RWPE1 (cell line): ENCODE measurements at regions of chr11 and their contacts with region 1.

Region 1: GRCh38 chr11:61639816-61640443 is 40.3 kb upstream of the DAGLA start:
- DNase-seq: no peak
- H3K27ac ChIP-seq: no peak overlapping the region
- CTCF ChIP-seq: no peak

Region 2: DNA sequence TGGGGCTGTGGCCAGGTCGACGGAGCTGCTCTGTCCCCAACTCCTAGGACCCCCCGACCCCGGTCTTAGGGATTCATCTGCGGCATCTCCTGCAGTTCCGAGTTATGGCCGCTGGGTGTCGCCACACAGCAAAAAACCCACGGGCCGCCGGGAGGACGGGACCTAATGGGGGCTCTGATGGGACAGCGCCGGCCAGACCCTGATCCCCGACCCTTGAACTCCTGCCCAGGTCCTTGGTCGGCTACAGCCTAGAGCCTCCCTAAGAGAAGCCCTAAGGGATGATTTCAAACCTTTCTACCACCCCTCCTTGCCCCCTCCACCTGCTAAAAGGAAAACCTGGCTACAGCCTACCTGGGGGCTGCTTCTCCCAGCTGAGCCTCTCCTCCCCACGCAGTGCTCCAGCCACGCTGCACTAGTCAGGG is 162.2 kb before region 1 on chr11:
- CTCF ChIA-PET with region 1: interaction called, 12 read pairs
- POLR2A ChIA-PET with region 1: interaction called, 6 read pairs
- DNase-seq: peak; percentile 53
- H3K27ac ChIP-seq: no peak overlapping the region
- CTCF ChIP-seq: peak; percentile 91

Region 3: DNA sequence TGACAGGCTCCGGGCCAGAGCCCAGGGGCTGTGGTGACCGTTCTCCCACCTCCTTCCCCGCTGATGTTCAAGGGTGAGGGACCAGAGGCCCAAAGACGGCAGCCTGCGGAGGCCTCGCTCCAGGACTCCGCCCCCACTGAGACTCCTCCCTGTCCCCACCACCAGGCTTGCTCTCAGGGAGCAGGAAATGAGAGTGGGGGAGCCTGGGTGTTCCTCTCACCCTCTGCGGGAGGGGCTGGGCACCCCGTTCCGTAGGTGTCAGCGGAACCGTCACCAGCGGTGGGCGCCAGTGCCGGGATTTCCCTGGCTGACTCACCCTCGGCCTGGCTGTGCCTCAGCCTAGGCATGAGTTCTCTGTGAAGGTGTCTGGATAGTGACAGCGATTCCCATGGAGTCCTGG is 56.0 kb after region 1 on chr11:
- CTCF ChIA-PET with region 1: no interaction called
- POLR2A ChIA-PET with region 1: no interaction called
- DNase-seq: peak; percentile 83
- H3K27ac ChIP-seq: peak overlapping the region; percentile 96
- CTCF ChIP-seq: no peak; the same call in 1 of the 2 replicates